Posterior vena cava (tissue), 2 donors: ENCODE measurements at regions of chr2 and their contacts with region 1.

Region 1: DNA sequence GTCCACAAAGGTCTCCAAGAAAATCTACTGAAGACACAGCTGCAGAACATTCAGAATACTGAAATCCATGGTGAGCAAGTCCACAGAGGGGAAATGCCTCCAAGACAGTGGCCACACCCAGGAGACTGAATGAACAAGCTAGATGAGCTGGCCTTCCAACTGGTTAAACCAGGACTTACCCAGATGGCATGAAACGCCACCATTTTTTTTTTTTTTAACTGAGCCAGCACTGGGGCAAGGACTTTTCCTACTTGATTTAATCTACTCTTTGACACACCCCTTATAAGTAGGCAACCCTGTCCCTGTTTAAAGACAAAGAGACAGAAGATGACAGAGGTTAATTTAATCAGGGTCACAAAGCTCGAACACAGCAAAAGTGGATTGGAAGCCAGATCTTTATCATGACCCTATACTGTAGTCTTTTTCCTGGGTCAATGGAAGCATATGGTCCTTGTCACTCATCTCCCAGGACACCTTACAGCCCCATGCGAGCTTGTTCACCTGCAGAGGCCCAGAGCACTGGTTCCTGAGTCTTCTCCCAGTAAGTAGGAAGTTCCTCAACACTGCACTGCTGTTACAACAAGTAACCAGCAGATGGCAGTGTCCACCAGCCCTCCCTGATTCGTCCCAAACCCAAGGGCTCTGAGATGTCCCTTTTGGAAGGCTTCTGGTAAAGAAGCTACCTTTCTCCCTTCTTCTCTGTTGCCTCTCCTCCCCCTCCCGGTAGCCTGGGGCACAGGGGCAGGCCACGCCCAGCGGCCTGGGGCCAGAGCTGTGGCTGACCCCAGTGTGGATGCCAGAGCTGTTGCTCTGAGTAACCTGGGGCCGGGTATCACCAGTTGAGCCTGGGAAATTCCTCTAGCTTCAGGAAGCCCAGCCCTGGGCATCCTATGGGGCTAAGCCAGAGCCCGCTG is 5.6 kb upstream of the GDF7 start:
- DNase-seq: peak; percentile 87

Region 2: GRCh38 chr2:20382965-20383810 is 278.1 kb before region 1 on chr2:
- intact Hi-C with region 1: no loop called
- DNase-seq: no peak

Region 3: DNA sequence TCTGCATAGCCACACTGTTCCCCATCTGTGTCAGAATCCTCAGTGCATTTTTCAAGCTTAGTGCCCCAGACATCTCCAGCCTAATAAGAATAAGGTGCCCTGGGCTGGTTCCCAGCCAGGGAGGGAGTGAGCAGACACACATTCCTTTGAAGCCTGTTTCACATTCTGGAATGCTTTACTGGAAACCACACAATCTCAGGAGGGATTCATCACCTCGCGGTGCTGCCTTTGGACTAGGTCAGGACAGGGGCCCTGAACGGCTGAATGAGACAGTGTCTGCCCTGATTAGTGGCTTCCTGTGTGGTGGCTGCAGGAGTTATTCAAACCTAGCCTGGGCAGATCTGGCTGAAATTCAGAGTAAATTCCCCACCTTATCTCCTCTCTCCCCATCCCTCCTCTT is 269.6 kb after region 1 on chr2:
- intact Hi-C with region 1: no loop called
- DNase-seq: no peak

Region 4: DNA sequence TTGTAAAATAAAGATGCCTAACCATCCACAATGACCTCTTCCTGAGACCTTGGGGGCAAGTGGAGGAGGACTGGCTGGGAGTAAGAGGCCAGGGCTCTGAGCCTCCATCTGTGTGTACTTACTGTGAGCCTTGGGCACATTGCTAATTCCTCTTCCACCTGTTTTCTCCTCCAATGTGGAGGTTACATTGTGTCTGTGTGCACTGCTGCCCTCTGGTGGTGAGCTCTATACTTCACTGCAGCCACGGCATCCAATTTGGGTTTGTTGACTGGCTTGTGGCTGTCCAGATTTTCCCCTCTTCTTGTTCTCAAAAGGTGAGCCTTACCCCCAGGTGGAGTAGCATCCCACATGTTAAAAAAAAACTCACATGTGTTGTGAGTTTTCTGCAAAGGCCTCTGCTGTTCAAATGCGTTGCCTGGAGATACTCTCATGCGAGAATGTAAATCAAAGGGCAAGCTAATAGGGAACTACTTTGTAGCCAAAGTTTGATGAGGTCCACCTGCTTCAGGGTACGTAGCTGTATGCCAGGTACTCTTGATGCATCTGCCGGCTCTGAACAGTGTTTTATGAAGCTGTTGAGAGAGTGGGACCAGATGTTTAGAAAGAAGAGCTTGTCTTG is 301.7 kb after region 1 on chr2:
- intact Hi-C with region 1: loop called (anchors 5 kb)
- DNase-seq: peak; percentile 87

Region 5: GRCh38 chr2:20992201-20992711 is 330.9 kb after region 1 on chr2:
- intact Hi-C with region 1: no loop called
- DNase-seq: peak; percentile 84

Region 6: GRCh38 chr2:21118302-21118920 is 457.1 kb after region 1 on chr2:
- intact Hi-C with region 1: loop called (anchors 10 kb)
- DNase-seq: no peak

Region 7: GRCh38 chr2:21123473-21124393 is 462.4 kb after region 1 on chr2 and contains the start of gene TDRD15:
- intact Hi-C with region 1: loop called (anchors 10 kb)
- DNase-seq: no peak
- total RNA-seq, gene TDRD15: 0.05 TPM in 1 of 2 donors, not detected in the other

Region 8: GRCh38 chr2:21461754-21462240 is 800.5 kb after region 1 on chr2:
- intact Hi-C with region 1: no loop called
- DNase-seq: no peak

Region 9: GRCh38 chr2:22062679-22063078 is 1401.4 kb after region 1 on chr2:
- intact Hi-C with region 1: loop called in 1 of 2 experiments (anchors 5 kb)
- DNase-seq: no peak